T-cell (primary cell): ENCODE measurements at regions of chrX and their contacts with region 1.

Region 1: GRCh38 chrX:29172880-29173279 is 585.6 kb downstream of the IL1RAPL1 start:
- DNase-seq: no peak
- ATAC-seq: no peak
- H3K4me3 ChIP-seq: no peak overlapping the region
- H3K4me3 Mint-ChIP-seq: no peak overlapping the region
- H3K27ac ChIP-seq: no peak overlapping the region
- H3K27ac Mint-ChIP-seq: no peak overlapping the region
- H3K4me1 ChIP-seq: no peaks in the 10 kb centered on the region
- H3K4me1 Mint-ChIP-seq: no peaks in the 10 kb centered on the region
- H3K27me3 ChIP-seq: no peaks in the 10 kb centered on the region
- H3K27me3 Mint-ChIP-seq: no peaks in the 10 kb centered on the region

Region 2: DNA sequence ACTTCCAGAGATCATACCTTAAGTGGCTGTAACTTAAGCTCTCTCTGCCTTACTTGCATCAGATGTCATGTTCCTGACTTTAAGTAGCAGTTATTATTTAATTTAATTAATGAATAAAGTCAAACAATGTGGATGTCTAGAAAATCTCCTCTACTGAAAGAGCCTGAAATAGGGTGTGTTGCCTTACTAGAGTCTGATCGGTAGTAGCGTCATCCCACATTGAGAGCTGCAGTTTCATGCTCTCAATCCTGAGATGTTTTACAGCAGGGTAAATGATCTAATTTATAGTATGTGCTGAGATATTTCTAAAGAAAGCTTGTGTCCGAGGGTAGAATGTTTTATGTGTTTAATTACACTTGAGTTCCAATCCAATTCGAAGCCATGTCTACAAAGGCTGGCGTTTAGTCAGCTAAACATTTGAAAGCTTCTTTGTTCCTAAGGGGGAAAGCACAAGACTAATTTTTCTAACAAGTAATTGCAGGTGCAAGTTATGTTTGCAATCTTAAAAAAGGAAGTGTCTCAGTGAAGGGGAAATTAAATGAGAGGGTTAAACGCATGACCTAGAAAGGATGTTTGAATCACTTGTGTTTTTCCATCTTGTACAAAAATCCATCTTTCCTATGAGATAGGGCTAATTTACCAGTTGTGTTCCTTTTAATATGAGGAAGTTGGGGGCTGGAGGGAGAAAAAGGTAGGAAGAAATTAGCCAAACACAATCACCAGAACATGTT is 651.5 kb after region 1 on chrX:
- CTCF ChIA-PET with region 1: no interaction called
- POLR2A ChIA-PET with region 1: interaction called in 1 of 2 experiments, 14 read pairs
- DNase-seq: no peak
- ATAC-seq: no peak
- H3K4me3 ChIP-seq: no peak overlapping the region
- H3K4me3 Mint-ChIP-seq: no peak overlapping the region
- H3K27ac ChIP-seq: no peak overlapping the region
- H3K27ac Mint-ChIP-seq: no peak overlapping the region
- H3K4me1 ChIP-seq: no peaks in the 10 kb centered on the region
- H3K4me1 Mint-ChIP-seq: no peaks in the 10 kb centered on the region
- H3K27me3 ChIP-seq: no peaks in the 10 kb centered on the region
- H3K27me3 Mint-ChIP-seq: no peaks in the 10 kb centered on the region